GM10248 (cell line): ENCODE measurements at regions of chr1 and their contacts with region 1.

Region 1: DNA sequence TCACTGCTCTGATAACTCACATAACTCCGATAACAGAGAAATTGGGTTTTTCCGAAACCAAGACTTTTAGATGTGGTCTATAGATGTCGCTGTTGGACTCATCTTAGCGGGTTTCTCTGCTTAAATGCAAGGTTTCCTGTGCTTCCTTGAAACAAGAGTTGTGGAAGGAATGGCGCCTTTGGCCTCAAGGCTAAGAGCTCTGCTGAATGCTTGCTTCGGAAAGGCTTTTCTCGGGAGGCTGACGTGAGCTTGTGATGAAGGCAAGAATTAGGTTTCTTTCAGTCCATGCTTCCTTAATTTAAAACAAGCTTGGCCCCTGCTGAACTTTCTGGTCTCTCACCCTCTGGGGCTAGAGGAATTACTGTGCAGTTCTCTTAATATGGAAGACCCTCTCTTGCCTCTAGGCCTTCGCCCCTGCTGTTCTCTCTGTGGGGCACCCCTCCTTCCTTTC is 113.5 kb downstream of the MAP3K21 start:
- DNase-seq: peak; percentile 44
- CTCF ChIP-seq: peak; percentile 58

Region 2: DNA sequence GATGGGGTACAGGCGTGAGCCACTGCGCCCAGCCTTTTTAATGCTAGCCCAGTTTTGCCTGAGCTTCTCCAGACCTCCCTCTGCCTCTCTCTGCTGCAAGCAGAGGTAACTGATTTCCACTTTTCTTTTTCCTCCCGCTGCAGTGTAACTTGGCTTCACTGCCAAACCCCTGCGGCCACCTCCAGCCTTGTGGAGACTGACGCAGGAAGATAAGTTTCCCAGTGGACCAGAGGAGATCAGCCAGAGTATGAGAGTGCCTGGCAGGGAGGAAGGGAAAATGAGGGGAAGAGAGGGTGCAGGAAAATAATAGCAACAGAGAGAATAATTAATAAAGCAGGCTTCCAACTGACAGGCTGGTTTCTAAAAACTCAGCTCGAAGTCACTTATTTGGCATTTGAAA is 289.1 kb before region 1 on chr1:
- CTCF ChIA-PET with region 1: no interaction called
- POLR2A ChIA-PET with region 1: no interaction called
- DNase-seq: no peak
- CTCF ChIP-seq: no peak

Region 3: GRCh38 chr1:233355841-233356704 is 84.9 kb before region 1 on chr1:
- CTCF ChIA-PET with region 1: no interaction called
- POLR2A ChIA-PET with region 1: no interaction called
- DNase-seq: no peak
- CTCF ChIP-seq: no peak

Region 4: GRCh38 chr1:233452724-233453123 is 11.7 kb after region 1 on chr1:
- CTCF ChIA-PET with region 1: interaction called, 30 read pairs
- POLR2A ChIA-PET with region 1: no interaction called
- DNase-seq: no peak
- CTCF ChIP-seq: no peak

Region 5: DNA sequence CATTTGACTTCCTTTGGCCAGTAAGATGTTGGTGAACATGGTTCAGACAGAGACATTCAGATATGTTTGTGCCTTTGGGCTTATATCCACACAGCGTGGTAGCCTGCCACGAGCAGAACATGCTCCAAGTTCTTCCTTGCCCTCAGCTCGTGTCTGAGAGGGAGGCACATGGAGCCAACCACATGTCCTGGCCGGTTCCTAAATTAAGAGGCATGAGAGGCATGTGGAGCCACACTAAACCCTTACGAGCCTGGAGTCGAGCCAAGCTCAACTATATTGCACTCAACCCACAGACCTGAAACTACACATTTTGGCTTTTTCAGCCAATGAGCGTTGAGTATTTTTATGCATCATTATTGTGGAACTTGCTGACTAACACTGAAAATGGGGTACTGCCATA is 39.2 kb after region 1 on chr1:
- CTCF ChIA-PET with region 1: interaction called, 22 read pairs
- POLR2A ChIA-PET with region 1: no interaction called
- DNase-seq: no peak
- CTCF ChIP-seq: no peak

Region 6: GRCh38 chr1:233530665-233531386 is 89.8 kb after region 1 on chr1:
- CTCF ChIA-PET with region 1: interaction called, 11 read pairs
- POLR2A ChIA-PET with region 1: no interaction called
- DNase-seq: no peak
- CTCF ChIP-seq: no peak

Region 7: GRCh38 chr1:234065794-234066447 is 624.9 kb after region 1 on chr1:
- CTCF ChIA-PET with region 1: interaction called, 42 read pairs
- POLR2A ChIA-PET with region 1: no interaction called
- DNase-seq: peak; percentile 59
- CTCF ChIP-seq: peak; percentile 79